ENCODE measurements at regions of chr3 and their contacts with region 1.

Region 1: DNA sequence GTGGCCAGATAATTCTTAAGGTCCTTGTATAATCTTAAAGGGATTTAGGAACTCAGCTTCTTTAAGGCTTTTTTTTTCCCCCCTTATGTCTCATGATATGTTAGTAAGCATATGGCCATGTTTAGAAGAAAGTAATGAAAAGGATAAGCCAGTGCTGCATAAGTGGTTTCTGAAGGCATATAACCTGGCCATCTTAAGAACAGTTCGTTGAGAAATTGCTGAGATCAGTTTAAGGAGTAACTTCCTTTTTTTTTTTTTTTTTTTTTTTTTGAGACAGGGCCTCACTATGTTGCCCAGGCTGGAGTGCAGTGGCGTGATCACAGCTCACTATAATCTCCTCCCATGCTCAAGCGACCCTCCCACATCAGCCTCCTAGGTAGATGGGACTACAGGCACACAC is 51.7 kb downstream of the UBE2E2 start:
- DNase-seq: no peak
- ATAC-seq: no peak
- H3K4me3 ChIP-seq: no peak overlapping the region
- H3K4me3 Mint-ChIP-seq: no peak overlapping the region
- H3K27ac ChIP-seq: no peak overlapping the region
- H3K27ac Mint-ChIP-seq: no peak overlapping the region
- H3K4me1 ChIP-seq: no peaks in the 10 kb centered on the region
- H3K4me1 Mint-ChIP-seq: peaks cover 25% of the 10 kb centered on the region
- H3K27me3 ChIP-seq: no peaks in the 10 kb centered on the region
- H3K27me3 Mint-ChIP-seq: no peaks in the 10 kb centered on the region
- CTCF ChIP-seq: no peak

Region 2: GRCh38 chr3:23276913-23277658 is 22.3 kb after region 1 on chr3:
- CTCF ChIA-PET with region 1: no interaction called
- POLR2A ChIA-PET with region 1: no interaction called
- intact Hi-C with region 1: loop called in 1 of 2 experiments (anchors 1 kb)
- DNase-seq: no peak
- ATAC-seq: no peak
- H3K4me3 ChIP-seq: no peak overlapping the region
- H3K4me3 Mint-ChIP-seq: no peak overlapping the region
- H3K27ac ChIP-seq: no peak overlapping the region
- H3K27ac Mint-ChIP-seq: no peak overlapping the region
- H3K4me1 ChIP-seq: no peaks in the 10 kb centered on the region
- H3K4me1 Mint-ChIP-seq: peaks cover 12% of the 10 kb centered on the region
- H3K27me3 ChIP-seq: no peaks in the 10 kb centered on the region
- H3K27me3 Mint-ChIP-seq: no peaks in the 10 kb centered on the region
- CTCF ChIP-seq: no peak

Region 3: DNA sequence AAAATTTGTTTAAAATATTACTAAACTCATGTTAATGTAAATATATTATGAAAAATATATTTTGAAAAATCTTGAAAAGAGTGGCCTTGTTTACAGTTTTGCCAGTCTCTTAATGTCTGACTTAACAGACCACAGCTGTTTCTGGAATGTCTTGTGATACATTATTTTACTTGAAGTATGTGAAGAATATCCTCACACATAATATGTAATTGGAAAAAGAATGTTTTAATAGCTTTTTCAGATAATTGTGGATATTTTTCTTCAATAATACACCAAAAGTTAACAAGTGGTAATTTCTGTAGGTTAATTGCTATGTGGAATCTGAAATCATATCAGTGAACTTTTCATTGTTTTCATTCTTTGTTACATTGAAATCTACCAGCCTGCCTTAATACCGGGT is 49.6 kb after region 1 on chr3:
- CTCF ChIA-PET with region 1: no interaction called
- POLR2A ChIA-PET with region 1: no interaction called
- intact Hi-C with region 1: no loop called
- DNase-seq: no peak
- ATAC-seq: no peak
- H3K4me3 ChIP-seq: no peak overlapping the region
- H3K4me3 Mint-ChIP-seq: no peak overlapping the region
- H3K27ac ChIP-seq: no peak overlapping the region
- H3K27ac Mint-ChIP-seq: no peak overlapping the region
- H3K4me1 ChIP-seq: no peaks in the 10 kb centered on the region
- H3K4me1 Mint-ChIP-seq: peaks cover 2% of the 10 kb centered on the region
- H3K27me3 ChIP-seq: no peaks in the 10 kb centered on the region
- H3K27me3 Mint-ChIP-seq: no peaks in the 10 kb centered on the region
- CTCF ChIP-seq: no peak

Region 4: GRCh38 chr3:24270204-24270691 is 1015.4 kb after region 1 on chr3:
- CTCF ChIA-PET with region 1: no interaction called
- POLR2A ChIA-PET with region 1: no interaction called
- intact Hi-C with region 1: no loop called
- DNase-seq: no peak
- ATAC-seq: no peak
- H3K4me3 ChIP-seq: no peak overlapping the region
- H3K4me3 Mint-ChIP-seq: no peak overlapping the region
- H3K27ac ChIP-seq: no peak overlapping the region
- H3K27ac Mint-ChIP-seq: no peak overlapping the region
- H3K4me1 ChIP-seq: no peaks in the 10 kb centered on the region
- H3K4me1 Mint-ChIP-seq: no peaks in the 10 kb centered on the region
- H3K27me3 ChIP-seq: no peaks in the 10 kb centered on the region
- H3K27me3 Mint-ChIP-seq: peaks cover 3% of the 10 kb centered on the region
- CTCF ChIP-seq: no peak

Measured in CD8-positive, alpha-beta T cell (primary cell).